ENCODE measurements at regions of chr5 and their contacts with region 1.

Region 1: GRCh38 chr5:163459922-163460766 is at the starts of genes HMMR and NUDCD2:
- DNase-seq: peak; percentile 95
- ATAC-seq: peak; percentile 88
- H3K4me3 Mint-ChIP-seq: peak within 1 kb of the TSS; percentile 95
- H3K27ac Mint-ChIP-seq: peak within 1 kb of the TSS; percentile 100
- H3K4me1 Mint-ChIP-seq: peaks cover 36% of the 10 kb centered on the region
- H3K27me3 Mint-ChIP-seq: no peaks in the 10 kb centered on the region
- total RNA-seq, gene HMMR: 94.1 to 102 TPM
- total RNA-seq, gene NUDCD2: 37.8 to 51.3 TPM

Region 2: GRCh38 chr5:162685302-162685701 is 774.8 kb before region 1 on chr5:
- CTCF ChIA-PET with region 1: no interaction called
- POLR2A ChIA-PET with region 1: no interaction called
- intact Hi-C with region 1: no loop called
- DNase-seq: no peak
- ATAC-seq: no peak
- H3K4me3 Mint-ChIP-seq: no peak overlapping the region
- H3K27ac Mint-ChIP-seq: no peak overlapping the region
- H3K4me1 Mint-ChIP-seq: no peaks in the 10 kb centered on the region
- H3K27me3 Mint-ChIP-seq: no peaks in the 10 kb centered on the region

Region 3: GRCh38 chr5:163269624-163270023 is 190.5 kb before region 1 on chr5:
- CTCF ChIA-PET with region 1: no interaction called
- POLR2A ChIA-PET with region 1: no interaction called
- intact Hi-C with region 1: no loop called
- DNase-seq: no peak
- ATAC-seq: no peak
- H3K4me3 Mint-ChIP-seq: no peak overlapping the region
- H3K27ac Mint-ChIP-seq: no peak overlapping the region
- H3K4me1 Mint-ChIP-seq: no peaks in the 10 kb centered on the region
- H3K27me3 Mint-ChIP-seq: no peaks in the 10 kb centered on the region

Region 4: GRCh38 chr5:163330723-163331668 is 129.1 kb before region 1 on chr5:
- CTCF ChIA-PET with region 1: no interaction called
- POLR2A ChIA-PET with region 1: no interaction called
- intact Hi-C with region 1: no loop called
- DNase-seq: no peak
- ATAC-seq: no peak
- H3K4me3 Mint-ChIP-seq: no peak overlapping the region
- H3K27ac Mint-ChIP-seq: no peak overlapping the region
- H3K4me1 Mint-ChIP-seq: no peaks in the 10 kb centered on the region
- H3K27me3 Mint-ChIP-seq: peaks cover 8% of the 10 kb centered on the region

Region 5: DNA sequence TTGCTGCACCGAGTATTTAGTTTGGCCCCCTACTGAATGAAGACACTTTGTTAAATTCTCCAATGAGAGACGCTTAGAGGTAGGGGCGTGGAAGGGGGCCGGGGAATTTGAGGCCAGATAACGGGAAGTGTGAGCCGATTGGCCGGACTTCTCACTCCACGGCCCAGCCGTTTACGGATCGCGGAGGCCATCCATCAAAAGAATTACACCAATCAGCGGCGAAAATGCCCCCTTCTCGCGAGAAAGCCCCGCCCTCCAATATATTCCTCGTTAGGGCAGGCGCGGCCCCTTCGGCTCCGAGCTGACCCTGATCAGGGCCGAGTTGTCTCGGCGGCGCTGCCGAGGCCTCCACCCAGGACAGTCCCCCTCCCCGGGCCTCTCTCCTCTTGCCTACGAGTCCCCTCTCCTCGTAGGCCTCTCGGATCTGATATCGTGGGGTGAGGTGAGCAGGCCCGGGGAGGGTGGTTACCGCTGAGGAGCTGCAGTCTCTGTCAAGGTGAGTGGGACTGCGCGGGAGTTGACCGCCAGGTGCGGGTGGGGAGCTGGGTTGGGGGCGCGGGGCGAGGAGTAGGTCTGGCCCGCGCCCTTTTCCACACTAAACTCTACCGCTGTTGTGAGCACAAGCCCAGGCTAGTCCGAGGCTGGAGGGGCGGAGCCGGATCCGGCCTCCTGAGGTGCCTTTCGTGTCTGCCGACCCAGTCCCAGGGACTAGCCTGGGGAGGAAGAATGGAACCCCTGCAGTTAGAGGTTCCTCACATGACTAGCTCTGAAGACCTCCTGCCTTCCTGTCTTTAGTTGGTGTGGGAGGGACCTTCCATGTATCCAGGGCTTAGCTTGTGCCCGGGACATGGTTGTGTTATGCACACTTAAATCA is 22.6 kb before region 1 on chr5 and contains the start of gene CCNG1:
- CTCF ChIA-PET with region 1: interaction called, 30 read pairs
- POLR2A ChIA-PET with region 1: interaction called, 58 read pairs
- intact Hi-C with region 1: loop called (anchors 1 kb)
- DNase-seq: peak; percentile 93
- ATAC-seq: peak; percentile 96
- H3K4me3 Mint-ChIP-seq: peak within 1 kb of the TSS; percentile 83
- H3K27ac Mint-ChIP-seq: peak within 1 kb of the TSS; percentile 88
- H3K4me1 Mint-ChIP-seq: peaks cover 41% of the 10 kb centered on the region
- H3K27me3 Mint-ChIP-seq: no peaks in the 10 kb centered on the region
- total RNA-seq, gene CCNG1: 114 to 120 TPM